Endothelial cell of umbilical vein (primary cell): ENCODE measurements at regions of chr2 and their contacts with region 1.

Region 1: GRCh38 chr2:27954771-27955383 is 64.3 kb downstream of the BABAM2 start:
- DNase-seq: peak; percentile 99
- H3K4me3 ChIP-seq: no peak overlapping the region
- H3K27ac ChIP-seq: peak overlapping the region; percentile 95
- H3K4me1 ChIP-seq: peaks cover 47% of the 10 kb centered on the region
- H3K27me3 ChIP-seq: no peaks in the 10 kb centered on the region
- CTCF ChIP-seq: peak; percentile 33 to 37
- POLR2A ChIP-seq: peak; percentile 94

Region 2: GRCh38 chr2:27461118-27461517 is 493.8 kb before region 1 on chr2:
- CTCF ChIA-PET with region 1: no interaction called
- POLR2A ChIA-PET with region 1: no interaction called
- dilution Hi-C with region 1: no loop called
- intact Hi-C with region 1: no loop called
- DNase-seq: no peak
- H3K4me3 ChIP-seq: no peak overlapping the region
- H3K27ac ChIP-seq: no peak overlapping the region
- H3K4me1 ChIP-seq: no peaks in the 10 kb centered on the region
- H3K27me3 ChIP-seq: no peaks in the 10 kb centered on the region
- CTCF ChIP-seq: no peak
- POLR2A ChIP-seq: no peak

Region 3: GRCh38 chr2:27703638-27704341 is 251.1 kb before region 1 on chr2:
- CTCF ChIA-PET with region 1: interaction called, 5 read pairs
- POLR2A ChIA-PET with region 1: no interaction called
- dilution Hi-C with region 1: no loop called
- intact Hi-C with region 1: loop called (anchors 2 kb)
- DNase-seq: peak; percentile 90
- H3K4me3 ChIP-seq: no peak overlapping the region
- H3K27ac ChIP-seq: no peak overlapping the region
- H3K4me1 ChIP-seq: peaks cover 17% of the 10 kb centered on the region
- H3K27me3 ChIP-seq: no peaks in the 10 kb centered on the region
- CTCF ChIP-seq: peak; percentile 82 to 88
- POLR2A ChIP-seq: no peak

Region 4: DNA sequence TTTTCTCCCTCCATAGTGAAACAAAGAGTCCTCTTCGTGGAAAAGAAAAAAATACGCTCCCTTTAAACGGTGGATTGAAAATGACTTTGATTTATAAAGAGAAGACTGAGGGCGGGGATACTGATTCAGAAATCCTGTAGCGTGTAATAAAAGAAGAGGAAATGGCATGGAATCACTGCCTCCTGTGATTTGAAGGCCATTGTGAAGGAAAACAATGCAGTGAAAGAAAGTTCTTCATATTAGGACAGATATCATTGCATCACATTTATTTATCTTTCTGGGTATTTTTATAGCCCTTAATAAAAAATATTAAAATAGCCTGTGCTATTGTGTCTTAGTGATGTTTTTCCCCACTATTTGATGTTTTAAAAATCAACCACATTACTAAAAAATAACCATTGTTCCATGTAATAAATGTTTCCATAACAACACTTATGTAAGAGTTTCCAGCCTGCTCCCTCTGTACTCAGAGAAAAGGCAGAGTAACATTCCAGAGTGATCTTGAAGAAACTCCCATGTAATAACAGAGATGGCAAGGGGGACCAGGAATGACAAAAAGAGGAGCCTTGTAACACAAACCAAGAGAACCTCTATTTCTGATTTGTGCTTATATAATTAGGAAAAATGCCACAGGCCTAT is 175.3 kb before region 1 on chr2:
- CTCF ChIA-PET with region 1: no interaction called
- POLR2A ChIA-PET with region 1: no interaction called
- dilution Hi-C with region 1: no loop called
- intact Hi-C with region 1: loop called (anchors 1 kb)
- DNase-seq: peak; percentile 94
- H3K4me3 ChIP-seq: no peak overlapping the region
- H3K27ac ChIP-seq: peak overlapping the region; percentile 96
- H3K4me1 ChIP-seq: peaks cover 23% of the 10 kb centered on the region
- H3K27me3 ChIP-seq: no peaks in the 10 kb centered on the region
- CTCF ChIP-seq: no peak
- POLR2A ChIP-seq: peak; percentile 15

Region 5: GRCh38 chr2:27832396-27832795 is 122.5 kb before region 1 on chr2:
- CTCF ChIA-PET with region 1: no interaction called
- POLR2A ChIA-PET with region 1: no interaction called
- dilution Hi-C with region 1: no loop called
- intact Hi-C with region 1: no loop called
- DNase-seq: peak; percentile 78
- H3K4me3 ChIP-seq: no peak overlapping the region
- H3K27ac ChIP-seq: peak overlapping the region; percentile 15
- H3K4me1 ChIP-seq: peaks cover 22% of the 10 kb centered on the region
- H3K27me3 ChIP-seq: no peaks in the 10 kb centered on the region
- CTCF ChIP-seq: no peak
- POLR2A ChIP-seq: no peak

Region 6: GRCh38 chr2:27885234-27885633 is 69.6 kb before region 1 on chr2:
- CTCF ChIA-PET with region 1: no interaction called
- POLR2A ChIA-PET with region 1: no interaction called
- dilution Hi-C with region 1: no loop called
- intact Hi-C with region 1: loop called (anchors 1 kb)
- DNase-seq: no peak
- H3K4me3 ChIP-seq: no peak overlapping the region
- H3K27ac ChIP-seq: peak overlapping the region; percentile 94
- H3K4me1 ChIP-seq: peaks cover 29% of the 10 kb centered on the region
- H3K27me3 ChIP-seq: no peaks in the 10 kb centered on the region
- CTCF ChIP-seq: no peak
- POLR2A ChIP-seq: no peak

Region 7: GRCh38 chr2:27977608-27978312 is 22.9 kb after region 1 on chr2:
- CTCF ChIA-PET with region 1: interaction called, 4 read pairs
- POLR2A ChIA-PET with region 1: no interaction called
- dilution Hi-C with region 1: no loop called
- intact Hi-C with region 1: loop called (anchors 1 kb)
- DNase-seq: peak; percentile 76
- H3K4me3 ChIP-seq: no peak overlapping the region
- H3K27ac ChIP-seq: peak overlapping the region; percentile 68
- H3K4me1 ChIP-seq: peaks cover 25% of the 10 kb centered on the region
- H3K27me3 ChIP-seq: no peaks in the 10 kb centered on the region
- CTCF ChIP-seq: no peak
- POLR2A ChIP-seq: peak; percentile 31

Region 8: GRCh38 chr2:28080911-28081310 is 126.0 kb after region 1 on chr2:
- CTCF ChIA-PET with region 1: no interaction called
- POLR2A ChIA-PET with region 1: interaction called, 3 read pairs
- dilution Hi-C with region 1: no loop called
- intact Hi-C with region 1: loop called (anchors 1 kb)
- DNase-seq: peak; percentile 93
- H3K4me3 ChIP-seq: peak overlapping the region in 1 of 3 experiments; percentile 1
- H3K27ac ChIP-seq: peak overlapping the region; percentile 88
- H3K4me1 ChIP-seq: peaks cover 31% of the 10 kb centered on the region
- H3K27me3 ChIP-seq: no peaks in the 10 kb centered on the region
- CTCF ChIP-seq: no peak
- POLR2A ChIP-seq: peak; percentile 73

Region 9: DNA sequence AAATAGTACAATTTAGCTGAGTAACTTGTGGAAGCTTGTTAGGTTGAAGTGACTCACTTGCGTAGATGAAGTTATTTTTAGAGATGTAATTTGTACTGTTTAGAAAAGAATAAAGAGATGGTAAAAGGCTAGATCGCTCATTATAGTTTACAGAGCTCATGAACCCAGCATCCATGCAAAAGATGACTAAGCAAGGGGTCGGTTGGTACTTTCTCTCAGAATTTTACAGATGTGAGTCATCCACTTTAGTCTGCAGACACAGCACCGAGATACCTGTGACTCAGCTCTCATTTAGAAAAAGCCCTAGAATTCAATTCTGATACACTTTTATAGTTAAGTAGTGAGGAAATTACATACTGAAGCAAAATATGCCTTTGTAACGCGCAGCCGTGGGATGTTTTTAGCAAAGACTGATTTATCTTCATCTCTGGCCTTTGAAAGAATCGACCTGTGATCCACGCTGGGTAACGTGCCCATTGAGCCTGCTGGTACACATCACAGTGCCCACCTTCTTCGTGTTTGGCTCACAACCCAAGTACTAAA is 321.3 kb after region 1 on chr2:
- CTCF ChIA-PET with region 1: interaction called, 10 read pairs
- POLR2A ChIA-PET with region 1: interaction called, 4 read pairs
- dilution Hi-C with region 1: no loop called
- intact Hi-C with region 1: loop called (anchors 1 kb)
- DNase-seq: peak; percentile 96
- H3K4me3 ChIP-seq: no peak overlapping the region
- H3K27ac ChIP-seq: peak overlapping the region; percentile 98
- H3K4me1 ChIP-seq: peaks cover 29% of the 10 kb centered on the region
- H3K27me3 ChIP-seq: no peaks in the 10 kb centered on the region
- CTCF ChIP-seq: no peak
- POLR2A ChIP-seq: no peak

Region 10: GRCh38 chr2:28311660-28312249 is 356.9 kb after region 1 on chr2:
- CTCF ChIA-PET with region 1: no interaction called
- POLR2A ChIA-PET with region 1: no interaction called
- dilution Hi-C with region 1: no loop called
- intact Hi-C with region 1: no loop called
- DNase-seq: no peak
- H3K4me3 ChIP-seq: no peak overlapping the region
- H3K27ac ChIP-seq: no peak overlapping the region
- H3K4me1 ChIP-seq: no peaks in the 10 kb centered on the region
- H3K27me3 ChIP-seq: no peaks in the 10 kb centered on the region
- CTCF ChIP-seq: no peak
- POLR2A ChIP-seq: no peak